ENCODE measurements at regions of chr12 and their contacts with region 1.

Region 1: GRCh38 chr12:93387780-93388179 is 10.1 kb downstream of the NUDT4 start:
- DNase-seq: no peak
- ATAC-seq: peak in 4 of 8 donors; percentile 30 to 58 (median 48)
- H3K4me3 ChIP-seq: no peak overlapping the region
- H3K27ac ChIP-seq: peak overlapping the region in 5 of 10 donors; percentile 6 to 50 (median 23)
- H3K4me1 ChIP-seq: peaks cover 3 to 92% (median 66%) of the 10 kb centered on the region in 9 donors
- H3K27me3 ChIP-seq: no peaks in the 10 kb centered on the region
- CTCF ChIP-seq: no peak

Region 2: GRCh38 chr12:92995258-92995903 is 392.4 kb before region 1 on chr12:
- intact Hi-C with region 1: loop called in 1 of 10 experiments (anchors 10 kb)
- DNase-seq: no peak
- ATAC-seq: no peak
- H3K4me3 ChIP-seq: no peak overlapping the region
- H3K27ac ChIP-seq: no peak overlapping the region
- H3K4me1 ChIP-seq: no peaks in the 10 kb centered on the region
- H3K27me3 ChIP-seq: no peaks in the 10 kb centered on the region
- CTCF ChIP-seq: no peak

Region 3: GRCh38 chr12:93279565-93280412 is 108.0 kb before region 1 on chr12:
- intact Hi-C with region 1: no loop called
- DNase-seq: no peak
- ATAC-seq: peak in 1 of 8 donors; percentile 19
- H3K4me3 ChIP-seq: no peak overlapping the region
- H3K27ac ChIP-seq: no peak overlapping the region
- H3K4me1 ChIP-seq: peaks cover 0 to 6% (median 0%) of the 10 kb centered on the region in 9 donors
- H3K27me3 ChIP-seq: no peaks in the 10 kb centered on the region
- CTCF ChIP-seq: no peak

Region 4: DNA sequence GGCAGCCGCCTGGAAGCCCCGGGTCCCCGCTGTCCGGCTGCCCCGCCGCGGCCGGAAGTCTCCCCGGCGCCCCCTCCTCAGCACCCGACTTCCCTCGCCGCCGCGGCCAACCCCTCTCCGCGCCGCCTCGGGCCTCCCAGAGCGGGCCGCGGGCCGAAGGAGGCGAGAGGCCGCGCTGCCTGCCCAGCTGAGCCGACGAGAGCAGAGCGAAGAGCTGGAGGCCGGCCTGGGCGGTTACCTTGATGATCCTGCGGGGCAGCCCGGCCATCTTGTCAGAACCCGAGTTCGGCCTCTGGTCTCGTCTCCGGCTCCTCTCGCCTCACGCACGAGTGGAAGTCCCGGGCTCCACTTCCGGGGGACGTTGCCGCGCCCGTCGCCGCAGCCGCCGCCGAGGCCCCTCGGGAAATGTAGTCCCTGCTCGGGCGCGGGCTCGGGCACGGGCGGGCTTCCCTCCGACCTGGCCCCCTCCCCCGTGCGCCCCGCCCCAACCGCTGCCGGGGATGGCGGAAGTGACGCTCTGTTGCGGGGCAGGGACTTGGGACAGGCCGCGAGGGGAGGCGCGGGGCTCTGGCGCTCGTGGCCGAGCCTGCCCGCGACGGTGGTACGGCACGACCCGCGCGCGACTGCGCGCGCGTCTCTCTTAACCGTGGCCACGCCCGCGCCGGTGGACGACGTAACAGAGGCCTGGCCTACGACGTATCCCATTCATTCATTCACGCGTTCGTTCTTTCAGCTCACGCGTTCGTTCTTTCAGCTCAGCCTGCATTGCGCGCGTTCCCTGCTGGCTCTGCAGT is 54.0 kb after region 1 on chr12 and contains the start of gene UBE2N:
- intact Hi-C with region 1: no loop called
- DNase-seq: peak; percentile 95 to 97
- ATAC-seq: peak; percentile 93 to 98 (median 96)
- H3K4me3 ChIP-seq: peak within 1 kb of the TSS; percentile 73 to 99 (median 84)
- H3K27ac ChIP-seq: peak within 1 kb of the TSS; percentile 73 to 97 (median 91)
- H3K4me1 ChIP-seq: peaks cover 0 to 50% (median 47%) of the 10 kb centered on the region in 9 donors
- H3K27me3 ChIP-seq: no peaks in the 10 kb centered on the region
- CTCF ChIP-seq: peak in 1 of 9 donors; percentile 8
- total RNA-seq, gene UBE2N: 86.3 to 109 (median 96.7) TPM

Measured in heart right ventricle (tissue), 16 donors.